Left colon (tissue), 2 donors: ENCODE measurements at regions of chr22 and their contacts with region 1.

Region 1: DNA sequence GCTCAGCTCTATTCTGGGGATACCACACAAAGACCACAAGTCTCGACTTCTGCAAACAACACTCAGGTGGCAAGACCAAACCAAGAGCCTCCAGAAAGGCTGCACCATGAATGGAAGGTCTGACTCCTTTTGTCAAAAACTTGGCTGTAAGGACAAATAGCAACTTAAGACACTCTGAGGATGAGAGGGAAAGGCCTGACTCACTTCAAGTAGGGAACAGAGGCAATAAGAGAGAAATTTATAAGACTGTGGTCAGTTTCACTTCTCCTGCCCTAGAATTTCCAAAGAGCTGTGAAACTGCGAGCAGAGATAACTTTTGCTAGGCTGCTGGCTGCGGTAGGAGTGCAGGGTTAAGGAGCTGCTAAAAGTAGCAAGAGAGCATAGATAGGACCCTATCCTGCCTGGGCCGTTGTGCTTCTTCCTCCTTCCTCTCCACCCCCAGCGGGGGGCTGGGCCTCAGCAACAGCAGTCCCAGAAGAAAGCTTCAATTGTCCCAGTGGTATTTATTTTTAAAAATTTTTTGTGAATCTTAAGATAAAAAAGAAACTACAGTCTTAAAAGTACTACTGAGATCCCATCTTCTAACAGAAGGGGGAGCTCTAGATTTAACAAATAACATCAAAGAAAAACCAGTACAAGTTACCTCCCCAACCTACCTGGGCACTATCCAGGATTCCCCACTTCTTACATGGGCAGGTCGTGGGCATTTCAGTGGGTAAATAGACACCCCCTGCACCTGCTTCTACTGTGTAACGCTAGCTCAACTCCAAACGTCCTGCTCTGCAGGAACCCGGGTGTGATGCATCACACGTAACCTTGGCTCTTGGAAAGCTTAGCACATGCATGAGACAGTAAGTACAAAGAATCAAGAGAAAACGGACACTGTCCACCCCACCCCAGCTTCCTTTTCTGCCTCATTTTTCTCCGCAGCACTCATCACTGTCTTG is 66.4 kb downstream of the SGSM3 start:
- DNase-seq: peak in 1 of 2 donors; percentile 24
- ATAC-seq: peak; percentile 73

Region 2: GRCh38 chr22:40487663-40488249 is 51.0 kb after region 1 on chr22:
- intact Hi-C with region 1: loop called in 1 of 2 experiments (anchors 10 kb)
- DNase-seq: no peak
- ATAC-seq: peak; percentile 61

Region 3: DNA sequence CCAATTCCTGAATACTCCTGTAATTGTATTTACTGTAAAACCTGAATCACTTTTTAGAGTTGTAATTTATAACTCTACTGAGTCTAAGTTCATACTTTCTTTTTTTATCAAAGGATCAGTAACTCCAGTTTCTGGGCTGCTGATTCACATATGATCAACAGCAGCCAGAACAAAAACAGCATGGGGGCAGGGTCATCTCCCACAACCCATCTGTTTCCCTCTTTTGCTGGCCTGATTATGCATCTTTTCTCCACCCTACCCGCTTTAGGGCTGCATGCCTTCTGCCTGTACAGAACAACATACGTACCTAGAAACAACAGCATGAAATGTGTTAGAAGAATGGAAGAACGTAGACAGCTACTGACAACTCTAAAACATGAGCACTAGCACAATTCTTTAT is 123.8 kb after region 1 on chr22:
- intact Hi-C with region 1: no loop called
- DNase-seq: no peak
- ATAC-seq: no peak

Region 4: GRCh38 chr22:40645579-40646197 is 208.9 kb after region 1 on chr22:
- intact Hi-C with region 1: loop called in 1 of 2 experiments (anchors 2 kb)
- DNase-seq: no peak
- ATAC-seq: peak; percentile 8